Mammary epithelial cell (primary cell): ENCODE measurements at regions of chr19 and their contacts with region 1.

Region 1: GRCh38 chr19:4199699-4200293 is 17.3 kb downstream of the ANKRD24 start:
- DNase-seq: no peak
- H3K4me3 ChIP-seq: no peak overlapping the region
- H3K27ac ChIP-seq: no peak overlapping the region
- H3K4me1 ChIP-seq: no peaks in the 10 kb centered on the region
- H3K27me3 ChIP-seq: peaks cover 5% of the 10 kb centered on the region
- CTCF ChIP-seq: peak in 1 of 2 donors; percentile 38

Region 2: GRCh38 chr19:3774621-3775373 is 425.0 kb before region 1 on chr19:
- CTCF ChIA-PET with region 1: no interaction called
- dilution Hi-C with region 1: loop called (anchors 5 kb)
- in situ Hi-C with region 1: no loop called
- intact Hi-C with region 1: no loop called
- DNase-seq: no peak
- H3K4me3 ChIP-seq: no peak overlapping the region
- H3K27ac ChIP-seq: no peak overlapping the region
- H3K4me1 ChIP-seq: no peaks in the 10 kb centered on the region
- H3K27me3 ChIP-seq: no peaks in the 10 kb centered on the region
- CTCF ChIP-seq: no peak

Region 3: GRCh38 chr19:4052050-4052999 is 147.5 kb before region 1 on chr19:
- CTCF ChIA-PET with region 1: no interaction called
- dilution Hi-C with region 1: no loop called
- in situ Hi-C with region 1: no loop called
- intact Hi-C with region 1: loop called (anchors 5 kb)
- DNase-seq: peak; percentile 91
- H3K4me3 ChIP-seq: peak overlapping the region; percentile 21 to 34 (median 33)
- H3K27ac ChIP-seq: peak overlapping the region; percentile 97
- H3K4me1 ChIP-seq: peaks cover 32% of the 10 kb centered on the region
- H3K27me3 ChIP-seq: no peaks in the 10 kb centered on the region
- CTCF ChIP-seq: no peak

Region 4: DNA sequence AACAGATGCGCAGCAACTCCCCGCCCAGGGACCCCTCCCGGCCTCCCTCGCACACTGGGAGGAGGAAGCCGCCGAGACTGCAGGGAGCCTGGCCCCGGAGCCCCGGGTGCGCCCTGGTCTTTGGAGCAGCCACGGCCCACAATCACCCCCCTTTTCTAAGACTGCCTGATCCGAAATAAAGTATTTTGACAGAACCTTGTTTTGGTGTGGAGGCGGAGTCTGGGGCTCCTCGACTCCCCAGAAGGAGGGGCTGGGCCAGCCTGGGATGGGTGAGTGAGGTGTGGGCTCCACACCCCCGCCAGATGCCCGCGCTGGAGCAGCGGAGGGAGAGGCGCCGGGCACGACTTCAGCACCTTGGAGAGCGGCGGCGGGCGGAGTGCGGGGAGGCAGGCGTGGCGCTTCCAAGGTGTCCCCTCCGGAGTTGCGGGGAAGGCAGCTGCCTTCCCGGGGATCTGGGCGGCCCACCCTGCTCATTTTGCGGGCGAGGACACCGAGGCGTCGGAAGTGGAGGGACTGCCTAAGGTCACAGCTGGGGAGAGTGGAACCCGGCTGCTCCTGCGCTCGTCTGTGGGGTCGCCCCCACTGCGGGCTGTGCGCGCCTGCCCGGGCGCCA is 26.8 kb before region 1 on chr19:
- CTCF ChIA-PET with region 1: no interaction called
- dilution Hi-C with region 1: no loop called
- in situ Hi-C with region 1: no loop called
- intact Hi-C with region 1: no loop called
- DNase-seq: peak; percentile 36
- H3K4me3 ChIP-seq: no peak overlapping the region
- H3K27ac ChIP-seq: no peak overlapping the region
- H3K4me1 ChIP-seq: no peaks in the 10 kb centered on the region
- H3K27me3 ChIP-seq: peaks cover 2% of the 10 kb centered on the region
- CTCF ChIP-seq: no peak

Region 5: GRCh38 chr19:4232958-4233853 is 33.4 kb after region 1 on chr19:
- CTCF ChIA-PET with region 1: no interaction called
- dilution Hi-C with region 1: no loop called
- in situ Hi-C with region 1: no loop called
- intact Hi-C with region 1: no loop called
- DNase-seq: no peak
- H3K4me3 ChIP-seq: no peak overlapping the region
- H3K27ac ChIP-seq: no peak overlapping the region
- H3K4me1 ChIP-seq: peaks cover 7% of the 10 kb centered on the region
- H3K27me3 ChIP-seq: no peaks in the 10 kb centered on the region
- CTCF ChIP-seq: peak; percentile 59 to 71

Region 6: DNA sequence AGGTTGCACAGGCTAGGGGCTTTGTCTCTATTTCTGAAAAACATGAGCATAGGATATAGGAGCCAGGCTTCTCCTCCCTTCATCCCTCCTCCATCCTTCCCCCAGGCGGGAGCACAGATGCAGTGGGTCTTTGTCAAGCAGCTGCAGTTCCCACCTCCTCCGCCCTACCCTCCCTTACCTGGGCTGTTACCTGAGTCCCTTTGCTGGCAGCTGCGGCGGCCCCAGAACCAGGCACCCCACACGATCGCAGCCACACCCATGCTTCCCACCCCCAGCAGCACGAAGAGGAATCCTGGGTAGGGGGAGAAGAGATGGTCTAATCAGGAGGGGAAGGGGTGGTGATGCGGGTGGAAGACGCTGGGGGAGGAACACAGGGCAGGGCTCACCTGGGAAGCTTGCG is 94.6 kb after region 1 on chr19:
- CTCF ChIA-PET with region 1: no interaction called
- dilution Hi-C with region 1: loop called (anchors 5 kb)
- in situ Hi-C with region 1: no loop called
- intact Hi-C with region 1: no loop called
- DNase-seq: no peak
- H3K4me3 ChIP-seq: no peak overlapping the region
- H3K27ac ChIP-seq: no peak overlapping the region
- H3K4me1 ChIP-seq: no peaks in the 10 kb centered on the region
- H3K27me3 ChIP-seq: no peaks in the 10 kb centered on the region
- CTCF ChIP-seq: no peak